Activated T-helper 2 cell treated with anti-CD3 and anti-CD28 coated beads, Interferon-gamma antibody, Interleukin-2, Interleukin-4, amounts not matched to agents 10 μg/mL and 5 μg/mL and 100 μg/mL, durations not matched to agents 14 hours and 24 hours and 36 hours (primary cell): ENCODE measurements at regions of chr5 and their contacts with region 1.

Region 1: GRCh38 chr5:143453720-143454119 is 50.2 kb upstream of the NR3C1 start:
- DNase-seq: no peak
- H3K4me3 Mint-ChIP-seq: no peak overlapping the region
- H3K27ac Mint-ChIP-seq: no peak overlapping the region
- H3K4me1 Mint-ChIP-seq: peaks cover under 1% of the 10 kb centered on the region
- H3K27me3 Mint-ChIP-seq: no peaks in the 10 kb centered on the region

Region 2: GRCh38 chr5:143812085-143812705 is 358.5 kb after region 1 on chr5 and contains the start of gene HMHB1:
- intact Hi-C with region 1: loop called (anchors 5 kb)
- DNase-seq: no peak
- H3K4me3 Mint-ChIP-seq: peak within 1 kb of the TSS; percentile 75
- H3K27ac Mint-ChIP-seq: peak within 1 kb of the TSS; percentile 72
- H3K4me1 Mint-ChIP-seq: peaks cover 21% of the 10 kb centered on the region
- H3K27me3 Mint-ChIP-seq: peaks cover 2% of the 10 kb centered on the region
- total RNA-seq, gene HMHB1: not detected in 2 replicates